CD4-positive, alpha-beta memory T cell (primary cell): ENCODE measurements at regions of chr17 and their contacts with region 1.

Region 1: GRCh38 chr17:50514946-50515702 is 6.9 kb downstream of the MYCBPAP start:
- DNase-seq: no peak
- H3K4me3 ChIP-seq: no peak overlapping the region
- H3K4me3 Mint-ChIP-seq: no peak overlapping the region
- H3K27ac ChIP-seq: no peak overlapping the region
- H3K27ac Mint-ChIP-seq: no peak overlapping the region
- H3K4me1 ChIP-seq: peaks cover 30% of the 10 kb centered on the region
- H3K4me1 Mint-ChIP-seq: peaks cover 18 to 39% (median 27%) of the 10 kb centered on the region in 4 donors
- H3K27me3 ChIP-seq: no peaks in the 10 kb centered on the region
- H3K27me3 Mint-ChIP-seq: no peaks in the 10 kb centered on the region

Region 2: DNA sequence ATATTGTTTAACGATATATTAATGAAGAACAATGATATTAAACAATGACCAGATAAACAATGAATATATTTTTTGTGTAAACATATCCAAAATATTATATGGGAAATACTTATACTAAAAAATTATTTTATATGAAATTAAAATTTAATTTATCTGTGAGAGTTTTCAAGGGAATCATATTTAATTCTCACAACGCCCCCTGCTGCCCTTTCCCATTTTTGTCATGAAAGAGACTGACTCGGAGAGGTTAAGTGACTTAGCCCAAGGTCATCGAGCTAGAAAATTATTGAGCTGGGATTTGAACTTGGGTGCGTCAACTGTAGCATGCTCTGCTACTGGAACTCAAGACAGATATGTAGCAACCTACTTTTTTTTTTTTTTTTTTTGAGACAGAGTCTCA is 14.1 kb before region 1 on chr17:
- CTCF ChIA-PET with region 1: interaction called, 17 read pairs
- POLR2A ChIA-PET with region 1: interaction called, 3 read pairs
- intact Hi-C with region 1: no loop called
- DNase-seq: no peak
- H3K4me3 ChIP-seq: no peak overlapping the region
- H3K4me3 Mint-ChIP-seq: no peak overlapping the region
- H3K27ac ChIP-seq: no peak overlapping the region
- H3K27ac Mint-ChIP-seq: no peak overlapping the region
- H3K4me1 ChIP-seq: no peaks in the 10 kb centered on the region
- H3K4me1 Mint-ChIP-seq: peaks cover 0 to 8% (median 3%) of the 10 kb centered on the region in 4 donors
- H3K27me3 ChIP-seq: no peaks in the 10 kb centered on the region
- H3K27me3 Mint-ChIP-seq: no peaks in the 10 kb centered on the region

Region 3: GRCh38 chr17:50527155-50527762 is 12.1 kb after region 1 on chr17:
- CTCF ChIA-PET with region 1: no interaction called
- POLR2A ChIA-PET with region 1: no interaction called
- intact Hi-C with region 1: no loop called
- DNase-seq: no peak
- H3K4me3 ChIP-seq: no peak overlapping the region
- H3K4me3 Mint-ChIP-seq: no peak overlapping the region
- H3K27ac ChIP-seq: no peak overlapping the region
- H3K27ac Mint-ChIP-seq: no peak overlapping the region
- H3K4me1 ChIP-seq: peaks cover under 1% of the 10 kb centered on the region
- H3K4me1 Mint-ChIP-seq: peaks cover 0 to 3% (median 0%) of the 10 kb centered on the region in 4 donors
- H3K27me3 ChIP-seq: peaks cover 10% of the 10 kb centered on the region
- H3K27me3 Mint-ChIP-seq: peaks cover 26 to 33% of the 10 kb centered on the region in 2 donors